Activated CD4-positive, alpha-beta memory T cell treated with anti-CD3 and anti-CD28 coated beads for 36 hours (primary cell): ENCODE measurements at regions of chr11 and their contacts with region 1.

Region 1: GRCh38 chr11:63032457-63032856 is 16.8 kb upstream of the SLC22A8 start:
- DNase-seq: no peak
- H3K4me3 Mint-ChIP-seq: no peak overlapping the region
- H3K27ac Mint-ChIP-seq: no peak overlapping the region
- H3K4me1 Mint-ChIP-seq: peaks cover 2% of the 10 kb centered on the region
- H3K27me3 Mint-ChIP-seq: peaks cover 22% of the 10 kb centered on the region

Region 2: GRCh38 chr11:63212742-63213141 is 180.3 kb after region 1 on chr11:
- CTCF ChIA-PET with region 1: interaction called, 12 read pairs
- POLR2A ChIA-PET with region 1: no interaction called
- intact Hi-C with region 1: no loop called
- DNase-seq: peak; percentile 11
- H3K4me3 Mint-ChIP-seq: no peak overlapping the region
- H3K27ac Mint-ChIP-seq: no peak overlapping the region
- H3K4me1 Mint-ChIP-seq: no peaks in the 10 kb centered on the region
- H3K27me3 Mint-ChIP-seq: peaks cover 18% of the 10 kb centered on the region